IMR-90 (cell line): ENCODE measurements at regions of chr3 and their contacts with region 1.

Region 1: GRCh38 chr3:105868742-105869530 is at the start of gene CBLB:
- DNase-seq: peak; percentile 97
- ATAC-seq: peak; percentile 96
- H3K4me3 ChIP-seq: peak within 1 kb of the TSS; percentile 78
- H3K27ac ChIP-seq: peak within 1 kb of the TSS; percentile 92
- H3K4me1 ChIP-seq: peaks cover 2% of the 10 kb centered on the region; the same call in 1 of the 2 replicates
- H3K27me3 ChIP-seq: no peaks in the 10 kb centered on the region
- CTCF ChIP-seq: no peak
- POLR2A ChIP-seq: peak; percentile 84
- RAD21 ChIP-seq: no peak; the same call in 1 of the 2 replicates
- total RNA-seq, gene CBLB: 20.1 and 28.6 TPM in 2 replicates

Region 2: DNA sequence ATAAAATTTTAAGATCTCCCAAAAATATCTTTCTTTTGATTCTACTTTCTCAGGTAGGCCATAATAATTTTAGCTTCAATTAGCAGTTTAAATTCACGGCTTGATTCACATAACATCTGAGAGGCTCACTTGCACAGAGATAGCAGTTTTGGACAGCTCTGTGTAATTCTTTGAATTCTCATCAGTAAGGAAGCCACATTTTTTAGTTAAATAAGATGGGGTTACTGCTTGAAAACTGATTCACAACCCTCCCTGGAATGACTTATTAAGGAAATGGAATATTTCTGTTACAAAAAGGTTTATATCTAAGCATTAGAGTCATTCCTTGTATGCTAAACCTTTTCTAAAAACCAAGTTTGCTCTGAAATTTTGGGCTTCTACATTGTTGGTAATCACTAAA is 289.5 kb before region 1 on chr3:
- CTCF ChIA-PET with region 1: no interaction called
- POLR2A ChIA-PET with region 1: no interaction called
- dilution Hi-C with region 1: no loop called
- in situ Hi-C with region 1: no loop called
- intact Hi-C with region 1: loop called (anchors 10 kb)
- DNase-seq: peak; percentile 39
- ATAC-seq: peak; percentile 79
- H3K4me3 ChIP-seq: no peak overlapping the region
- H3K27ac ChIP-seq: no peak overlapping the region
- H3K4me1 ChIP-seq: no peaks in the 10 kb centered on the region; the same call in 1 of the 2 replicates
- H3K27me3 ChIP-seq: no peaks in the 10 kb centered on the region
- CTCF ChIP-seq: no peak
- POLR2A ChIP-seq: no peak
- RAD21 ChIP-seq: no peak

Region 3: DNA sequence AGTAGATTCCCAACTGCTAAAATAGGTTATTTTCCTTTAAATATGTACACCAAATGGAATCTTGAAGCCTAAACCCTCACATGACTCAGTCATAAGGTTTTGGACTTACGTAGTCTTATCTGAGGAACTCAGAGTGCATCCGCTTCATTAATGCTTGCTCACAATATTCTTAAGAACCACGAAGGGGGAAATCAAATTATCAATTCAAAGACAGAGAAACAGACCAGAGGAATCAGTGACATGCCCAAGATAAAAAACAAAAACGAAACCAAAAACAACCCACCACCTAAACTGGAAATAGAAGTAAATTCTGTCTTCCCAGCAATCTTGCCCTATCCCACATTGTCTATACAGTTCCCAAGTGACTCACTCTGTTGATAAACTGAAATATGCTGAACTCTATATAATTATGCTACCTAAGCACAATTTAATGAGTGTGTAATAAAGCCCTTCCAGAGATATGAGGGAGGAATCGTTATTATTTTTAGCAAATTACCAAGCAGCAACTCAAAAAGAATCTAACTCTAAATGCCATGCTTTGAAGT is 135.3 kb after region 1 on chr3:
- CTCF ChIA-PET with region 1: no interaction called
- POLR2A ChIA-PET with region 1: no interaction called
- dilution Hi-C with region 1: no loop called
- in situ Hi-C with region 1: no loop called
- intact Hi-C with region 1: loop called (anchors 2 kb)
- DNase-seq: peak; percentile 91
- ATAC-seq: peak; percentile 83
- H3K4me3 ChIP-seq: peak overlapping the region; percentile 75; the same call in 1 of the 2 replicates
- H3K27ac ChIP-seq: peak overlapping the region; percentile 29; the same call in 1 of the 2 replicates
- H3K4me1 ChIP-seq: peaks cover 4% of the 10 kb centered on the region
- H3K27me3 ChIP-seq: no peaks in the 10 kb centered on the region
- CTCF ChIP-seq: no peak
- POLR2A ChIP-seq: no peak
- RAD21 ChIP-seq: no peak

Region 4: DNA sequence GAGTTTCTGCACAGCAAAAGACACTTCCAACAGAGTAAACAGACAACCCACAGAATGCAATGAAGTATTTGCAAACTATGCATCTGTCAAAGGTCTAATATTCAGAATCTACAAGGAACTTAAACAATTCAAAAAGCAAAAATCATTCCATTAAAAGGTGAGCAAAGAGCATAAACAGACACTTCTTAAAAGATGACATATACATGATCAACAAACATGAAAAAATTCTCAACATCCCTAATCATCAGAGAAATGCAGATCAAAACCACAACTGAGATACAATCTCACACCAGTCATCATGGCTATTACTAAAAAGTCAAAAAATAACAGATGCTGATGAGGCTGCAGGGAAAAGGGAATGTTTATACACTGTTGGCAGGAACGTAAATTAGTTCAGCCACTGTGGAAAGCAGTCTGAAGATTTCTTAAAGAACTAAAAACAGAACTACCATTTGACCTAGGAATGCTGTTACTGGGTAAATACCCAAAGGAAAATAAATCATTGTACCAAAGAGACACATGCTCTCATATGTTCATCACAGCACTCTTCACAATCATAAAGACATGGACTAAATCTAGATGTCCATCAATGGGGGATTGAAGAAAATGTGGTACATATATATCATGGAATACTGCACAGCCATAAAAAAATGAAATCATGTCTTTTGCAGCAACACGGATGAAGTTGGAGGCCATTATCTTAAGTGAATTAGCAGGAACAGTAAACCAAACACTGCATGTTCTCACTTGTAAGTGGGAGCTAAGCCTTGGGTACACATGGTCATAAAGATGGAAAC is 393.1 kb after region 1 on chr3:
- CTCF ChIA-PET with region 1: no interaction called
- POLR2A ChIA-PET with region 1: no interaction called
- dilution Hi-C with region 1: no loop called
- in situ Hi-C with region 1: no loop called
- intact Hi-C with region 1: loop called (anchors 5 kb)
- DNase-seq: peak; percentile 85
- ATAC-seq: peak; percentile 84
- H3K4me3 ChIP-seq: no peak overlapping the region
- H3K27ac ChIP-seq: no peak overlapping the region
- H3K4me1 ChIP-seq: peaks cover 2% of the 10 kb centered on the region; the same call in 1 of the 2 replicates
- H3K27me3 ChIP-seq: no peaks in the 10 kb centered on the region
- CTCF ChIP-seq: no peak
- POLR2A ChIP-seq: no peak
- RAD21 ChIP-seq: no peak

Region 5: DNA sequence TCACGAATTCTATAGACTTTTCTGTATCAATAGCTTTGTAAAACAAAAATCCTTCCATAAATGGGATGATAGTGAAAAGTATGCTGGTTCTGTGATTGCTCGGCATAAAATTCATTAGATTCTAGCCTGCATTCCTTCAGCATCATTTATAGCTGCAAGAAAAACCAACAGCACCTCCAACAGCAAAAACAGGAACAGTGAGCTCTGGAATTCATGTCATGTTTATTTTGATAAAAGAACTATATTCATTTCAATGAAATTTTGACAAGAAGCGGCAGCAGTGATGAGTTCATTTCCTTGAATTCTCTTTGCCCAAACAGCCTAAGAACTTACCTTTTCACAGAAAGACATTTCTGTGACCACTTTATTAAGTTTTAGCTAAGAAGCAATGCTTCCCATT is 993.1 kb after region 1 on chr3:
- CTCF ChIA-PET with region 1: no interaction called
- POLR2A ChIA-PET with region 1: no interaction called
- dilution Hi-C with region 1: no loop called
- in situ Hi-C with region 1: no loop called
- intact Hi-C with region 1: loop called (anchors 5 kb)
- DNase-seq: peak; percentile 70
- ATAC-seq: peak; percentile 91
- H3K4me3 ChIP-seq: no peak overlapping the region
- H3K27ac ChIP-seq: no peak overlapping the region
- H3K4me1 ChIP-seq: 0 out of 2 replicates have a peak, but pooled peaks cover 1% of the 10 kb centered on the region
- H3K27me3 ChIP-seq: no peaks in the 10 kb centered on the region
- CTCF ChIP-seq: peak; percentile 55
- POLR2A ChIP-seq: no peak
- RAD21 ChIP-seq: peak; percentile 69